IMR-90 (cell line): ENCODE measurements at regions of chr13 and their contacts with region 1.

Region 1: GRCh38 chr13:29902101-29902952 is 51.9 kb upstream of the UBL3 start:
- DNase-seq: peak; percentile 97
- ATAC-seq: peak; percentile 90
- H3K4me3 ChIP-seq: no peak overlapping the region
- H3K27ac ChIP-seq: no peak overlapping the region
- H3K4me1 ChIP-seq: peaks cover 8% of the 10 kb centered on the region; the same call in 1 of the 2 replicates
- H3K27me3 ChIP-seq: peaks cover 2% of the 10 kb centered on the region; the same call in 1 of the 2 replicates
- CTCF ChIP-seq: no peak
- POLR2A ChIP-seq: no peak
- RAD21 ChIP-seq: no peak; the same call in 1 of the 2 replicates

Region 2: DNA sequence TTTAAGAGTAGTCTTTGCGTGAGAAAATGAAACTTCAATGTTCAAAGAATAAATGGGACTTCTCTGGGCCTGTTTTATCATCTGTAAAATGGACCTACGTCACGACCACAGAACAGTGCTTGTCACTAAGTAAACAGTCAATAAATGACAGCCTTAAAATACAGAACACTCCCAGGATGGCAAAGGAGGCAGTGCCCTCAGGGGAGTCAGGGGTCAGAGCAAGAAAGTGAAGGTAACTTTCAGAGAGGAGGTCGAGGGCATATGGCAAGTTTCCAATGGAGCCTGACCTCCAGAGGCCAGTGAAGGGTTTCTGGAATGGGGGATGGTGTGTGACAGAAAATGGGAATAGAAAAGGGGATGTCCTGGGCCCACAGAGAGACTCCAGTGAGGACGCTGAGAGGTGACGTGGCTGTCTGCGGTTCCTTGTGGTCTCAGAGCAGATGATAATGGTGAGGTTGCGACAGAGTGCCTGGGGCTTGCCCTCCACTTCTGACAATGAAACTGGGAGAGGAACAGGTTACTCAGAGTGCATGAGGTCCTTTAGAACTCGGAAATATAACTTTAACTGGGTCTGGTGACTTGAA is 143.7 kb before region 1 on chr13:
- CTCF ChIA-PET with region 1: no interaction called
- POLR2A ChIA-PET with region 1: no interaction called
- dilution Hi-C with region 1: no loop called
- in situ Hi-C with region 1: no loop called
- intact Hi-C with region 1: no loop called
- DNase-seq: no peak
- ATAC-seq: no peak
- H3K4me3 ChIP-seq: no peak overlapping the region
- H3K27ac ChIP-seq: no peak overlapping the region
- H3K4me1 ChIP-seq: no peaks in the 10 kb centered on the region
- H3K27me3 ChIP-seq: no peaks in the 10 kb centered on the region
- CTCF ChIP-seq: no peak
- POLR2A ChIP-seq: no peak
- RAD21 ChIP-seq: no peak

Region 3: GRCh38 chr13:29861694-29862110 is 40.6 kb before region 1 on chr13:
- CTCF ChIA-PET with region 1: no interaction called
- POLR2A ChIA-PET with region 1: no interaction called
- dilution Hi-C with region 1: no loop called
- in situ Hi-C with region 1: no loop called
- intact Hi-C with region 1: loop called (anchors 5 kb)
- DNase-seq: peak; percentile 97
- ATAC-seq: peak; percentile 91
- H3K4me3 ChIP-seq: no peak overlapping the region
- H3K27ac ChIP-seq: peak overlapping the region; percentile 51
- H3K4me1 ChIP-seq: peaks cover 10% of the 10 kb centered on the region; the same call in 1 of the 2 replicates
- H3K27me3 ChIP-seq: no peaks in the 10 kb centered on the region
- CTCF ChIP-seq: no peak
- POLR2A ChIP-seq: no peak
- RAD21 ChIP-seq: no peak